Common myeloid progenitor, CD34-positive (primary cell): ENCODE measurements at regions of chr1 and their contacts with region 1.

Region 1: GRCh38 chr1:27656157-27656893 is 15.7 kb downstream of the IFI6 start:
- DNase-seq: peak in 2 of 3 donors; percentile 73 to 75
- H3K4me3 ChIP-seq: no peak overlapping the region
- H3K27ac ChIP-seq: no peak overlapping the region
- H3K4me1 ChIP-seq: peaks cover 9 to 52% (median 26%) of the 10 kb centered on the region in 4 experiments
- H3K27me3 ChIP-seq: no peaks in the 10 kb centered on the region

Region 2: GRCh38 chr1:27643701-27644625 is 12.4 kb before region 1 on chr1:
- CTCF ChIA-PET with region 1: interaction called, 40 read pairs
- POLR2A ChIA-PET with region 1: no interaction called
- DNase-seq: peak; percentile 54 to 76 (median 70)
- H3K4me3 ChIP-seq: no peak overlapping the region
- H3K27ac ChIP-seq: no peak overlapping the region
- H3K4me1 ChIP-seq: peaks cover 0 to 7% (median 5%) of the 10 kb centered on the region in 4 experiments
- H3K27me3 ChIP-seq: no peaks in the 10 kb centered on the region

Region 3: DNA sequence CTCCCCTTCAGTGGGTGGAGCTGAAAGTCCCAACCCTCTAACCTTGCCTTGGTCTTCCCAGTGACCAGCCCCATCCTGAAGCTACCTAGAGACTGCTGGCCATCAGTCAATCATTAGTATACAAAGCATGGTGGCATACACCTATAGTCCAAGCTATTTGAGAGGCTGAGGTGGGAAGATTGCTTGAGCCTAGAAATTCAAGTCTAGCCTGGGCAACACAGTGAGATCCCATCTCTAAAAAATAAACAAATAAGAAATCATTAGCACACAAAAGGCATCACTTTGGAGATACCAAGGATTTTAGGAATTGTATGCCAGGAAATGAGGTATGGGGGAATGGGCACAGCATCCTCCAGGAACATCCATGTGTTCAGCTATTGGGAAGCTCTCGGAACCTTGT is 20.1 kb after region 1 on chr1:
- CTCF ChIA-PET with region 1: no interaction called
- POLR2A ChIA-PET with region 1: no interaction called
- DNase-seq: no peak
- H3K4me3 ChIP-seq: no peak overlapping the region
- H3K27ac ChIP-seq: no peak overlapping the region
- H3K4me1 ChIP-seq: peaks cover 5 to 17% (median 13%) of the 10 kb centered on the region in 4 experiments
- H3K27me3 ChIP-seq: no peaks in the 10 kb centered on the region